ENCODE measurements at regions of chr13 and their contacts with region 1.

Region 1: DNA sequence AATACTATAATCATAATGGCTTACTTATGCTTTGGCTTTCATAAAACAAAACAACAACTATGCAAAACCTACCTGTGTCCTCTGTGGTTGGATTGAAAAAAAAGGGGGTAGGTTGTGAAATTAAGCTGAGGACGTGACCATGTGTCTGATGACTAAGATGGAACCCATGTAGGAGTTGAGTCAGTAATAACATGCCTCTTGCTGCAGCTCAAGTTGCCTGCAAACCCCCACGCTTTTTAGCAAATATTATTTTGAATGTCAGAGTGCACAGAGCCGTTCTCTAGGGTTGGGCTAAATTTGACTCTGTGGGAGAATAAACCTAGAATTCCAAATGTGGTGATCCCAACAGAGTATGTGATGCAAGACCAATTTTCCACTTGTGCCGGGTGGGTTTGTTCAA is 209.3 kb downstream of the KCNRG start:
- DNase-seq: no peak
- H3K4me3 Mint-ChIP-seq: no peak overlapping the region
- H3K27ac Mint-ChIP-seq: no peak overlapping the region
- H3K4me1 Mint-ChIP-seq: peaks cover 49% of the 10 kb centered on the region
- H3K27me3 Mint-ChIP-seq: peaks cover 56% of the 10 kb centered on the region

Region 2: GRCh38 chr13:50140581-50141374 is 83.8 kb before region 1 on chr13:
- intact Hi-C with region 1: loop called (anchors 1 kb)
- DNase-seq: no peak
- H3K4me3 Mint-ChIP-seq: no peak overlapping the region
- H3K27ac Mint-ChIP-seq: no peak overlapping the region
- H3K4me1 Mint-ChIP-seq: peaks cover 8% of the 10 kb centered on the region
- H3K27me3 Mint-ChIP-seq: peaks cover 62% of the 10 kb centered on the region

Region 3: DNA sequence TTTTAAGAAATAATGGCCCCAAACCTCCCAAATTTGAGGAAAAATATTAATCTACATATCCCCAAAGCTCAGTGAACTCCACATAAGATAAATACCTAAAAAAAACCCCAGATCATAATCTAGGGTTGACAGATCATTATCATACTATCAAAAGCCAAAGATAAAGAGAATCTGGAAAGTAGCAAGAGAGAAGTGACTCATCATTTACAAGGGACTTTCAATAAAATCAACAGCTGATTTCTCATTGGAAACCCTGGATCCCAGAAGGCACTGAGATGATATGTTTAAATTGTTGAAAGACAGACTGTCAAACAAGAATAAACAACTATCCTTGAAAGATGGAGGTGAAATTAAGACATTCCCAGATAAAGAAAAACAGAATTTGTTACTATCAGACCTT is 10.0 kb before region 1 on chr13:
- intact Hi-C with region 1: loop called (anchors 1 kb)
- DNase-seq: no peak
- H3K4me3 Mint-ChIP-seq: no peak overlapping the region
- H3K27ac Mint-ChIP-seq: no peak overlapping the region
- H3K4me1 Mint-ChIP-seq: peaks cover 8% of the 10 kb centered on the region
- H3K27me3 Mint-ChIP-seq: peaks cover 51% of the 10 kb centered on the region

Region 4: GRCh38 chr13:50244713-50245574 is 20.4 kb after region 1 on chr13:
- intact Hi-C with region 1: loop called (anchors 1 kb)
- DNase-seq: peak; percentile 28
- H3K4me3 Mint-ChIP-seq: peak overlapping the region; percentile 10
- H3K27ac Mint-ChIP-seq: peak overlapping the region; percentile 34
- H3K4me1 Mint-ChIP-seq: peaks cover 36% of the 10 kb centered on the region
- H3K27me3 Mint-ChIP-seq: peaks cover 53% of the 10 kb centered on the region

Region 5: GRCh38 chr13:50255639-50256038 is 31.1 kb after region 1 on chr13:
- intact Hi-C with region 1: loop called (anchors 1 kb)
- DNase-seq: no peak
- H3K4me3 Mint-ChIP-seq: no peak overlapping the region
- H3K27ac Mint-ChIP-seq: no peak overlapping the region
- H3K4me1 Mint-ChIP-seq: peaks cover 27% of the 10 kb centered on the region
- H3K27me3 Mint-ChIP-seq: peaks cover 66% of the 10 kb centered on the region

Region 6: GRCh38 chr13:50448535-50448998 is 224.0 kb after region 1 on chr13:
- intact Hi-C with region 1: no loop called
- DNase-seq: no peak
- H3K4me3 Mint-ChIP-seq: no peak overlapping the region
- H3K27ac Mint-ChIP-seq: no peak overlapping the region
- H3K4me1 Mint-ChIP-seq: no peaks in the 10 kb centered on the region
- H3K27me3 Mint-ChIP-seq: peaks cover 13% of the 10 kb centered on the region

Region 7: GRCh38 chr13:50589139-50589538 is 364.6 kb after region 1 on chr13:
- intact Hi-C with region 1: no loop called
- DNase-seq: no peak
- H3K4me3 Mint-ChIP-seq: no peak overlapping the region
- H3K27ac Mint-ChIP-seq: no peak overlapping the region
- H3K4me1 Mint-ChIP-seq: peaks cover 23% of the 10 kb centered on the region
- H3K27me3 Mint-ChIP-seq: peaks cover 5% of the 10 kb centered on the region